ENCODE measurements at regions of chr10 and their contacts with region 1.

Region 1: GRCh38 chr10:69360485-69361324 is 56.0 kb downstream of the TACR2 start:
- DNase-seq: no peak
- ATAC-seq: no peak
- H3K4me3 ChIP-seq: peak overlapping the region; percentile 33
- H3K4me3 Mint-ChIP-seq: peak overlapping the region; percentile 79
- H3K27ac ChIP-seq: peak overlapping the region; percentile 33 to 55
- H3K27ac Mint-ChIP-seq: peak overlapping the region; percentile 94
- H3K4me1 ChIP-seq: peaks cover 52% of the 10 kb centered on the region
- H3K4me1 Mint-ChIP-seq: peaks cover 77% of the 10 kb centered on the region
- H3K27me3 ChIP-seq: no peaks in the 10 kb centered on the region
- H3K27me3 Mint-ChIP-seq: no peaks in the 10 kb centered on the region
- CTCF ChIP-seq: no peak

Region 2: GRCh38 chr10:69327463-69328379 is 33.0 kb before region 1 on chr10:
- CTCF ChIA-PET with region 1: interaction called, 4 read pairs
- POLR2A ChIA-PET with region 1: interaction called, 10 read pairs
- intact Hi-C with region 1: no loop called
- DNase-seq: peak in 12 of 14 experiments; percentile 16 to 70 (median 46)
- ATAC-seq: peak; percentile 80
- H3K4me3 ChIP-seq: peak overlapping the region; percentile 43
- H3K4me3 Mint-ChIP-seq: peak overlapping the region; percentile 86
- H3K27ac ChIP-seq: peak overlapping the region; percentile 29 to 53
- H3K27ac Mint-ChIP-seq: peak overlapping the region; percentile 87
- H3K4me1 ChIP-seq: peaks cover 47% of the 10 kb centered on the region
- H3K4me1 Mint-ChIP-seq: peaks cover 88% of the 10 kb centered on the region
- H3K27me3 ChIP-seq: no peaks in the 10 kb centered on the region
- H3K27me3 Mint-ChIP-seq: no peaks in the 10 kb centered on the region
- CTCF ChIP-seq: no peak